ENCODE measurements at regions of chr11 and their contacts with region 1.

Region 1: DNA sequence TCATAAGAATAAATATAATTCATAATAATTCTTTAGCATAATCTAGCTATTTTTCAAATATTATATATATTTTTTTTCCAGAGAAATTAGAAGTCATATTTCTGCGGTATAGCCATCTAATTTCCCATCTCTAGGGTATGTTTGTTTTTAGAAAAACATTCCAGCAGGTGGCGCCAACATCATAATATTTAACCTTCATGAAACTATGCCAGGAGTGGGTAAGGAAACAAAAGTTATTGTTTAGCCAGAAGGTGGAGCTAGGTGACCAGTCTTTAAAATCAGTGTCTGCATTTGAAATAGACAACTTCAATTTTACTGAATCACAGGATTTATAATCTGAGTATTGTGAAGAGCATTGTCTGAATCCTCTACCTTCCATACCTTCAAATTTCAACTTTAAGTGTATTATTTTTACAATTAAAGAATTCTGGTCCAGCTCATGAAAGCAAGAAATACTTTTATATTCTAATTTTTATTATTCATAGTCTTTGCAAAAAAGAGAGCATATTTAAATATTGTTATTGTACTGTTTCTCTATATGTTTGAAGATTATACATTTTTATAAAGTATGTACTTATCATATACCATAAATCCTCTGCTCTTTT is 15.7 kb upstream of the CCDC179 start:
- DNase-seq: peak; percentile 83
- H3K4me3 ChIP-seq: no peak overlapping the region
- H3K27ac ChIP-seq: no peak overlapping the region
- H3K4me1 ChIP-seq: no peaks in the 10 kb centered on the region
- H3K27me3 ChIP-seq: no peaks in the 10 kb centered on the region
- CTCF ChIP-seq: peak; percentile 50

Region 2: GRCh38 chr11:22920939-22921565 is 45.1 kb after region 1 on chr11:
- intact Hi-C with region 1: loop called (anchors 10 kb)
- DNase-seq: peak; percentile 23
- H3K4me3 ChIP-seq: no peak overlapping the region
- H3K27ac ChIP-seq: no peak overlapping the region
- H3K4me1 ChIP-seq: no peaks in the 10 kb centered on the region
- H3K27me3 ChIP-seq: no peaks in the 10 kb centered on the region
- CTCF ChIP-seq: peak; percentile 37

Region 3: DNA sequence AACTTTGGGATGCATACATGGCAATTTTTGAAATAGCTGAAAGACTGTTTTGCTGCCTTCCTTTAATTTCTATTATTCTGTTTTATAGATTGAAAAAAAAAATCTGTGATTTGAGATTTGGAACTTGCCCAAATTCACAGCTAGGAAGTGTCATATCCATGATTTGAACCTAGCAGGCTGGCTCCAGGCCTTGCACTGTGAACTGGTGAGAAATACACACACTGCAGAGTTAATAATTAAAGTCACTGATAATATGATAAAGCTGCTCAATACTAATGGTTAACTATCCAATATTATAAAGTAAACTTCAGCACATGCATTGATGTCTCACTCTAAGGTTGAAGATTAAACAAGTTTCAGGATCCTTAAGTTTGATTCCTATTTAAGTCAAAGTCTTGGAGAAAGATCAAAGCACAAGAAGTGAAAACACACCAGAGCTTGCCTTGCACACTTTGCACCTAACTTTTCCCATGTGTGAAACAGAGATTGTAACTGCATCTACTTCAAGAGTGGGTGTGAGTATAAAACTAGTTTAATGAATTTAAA is 134.9 kb after region 1 on chr11:
- intact Hi-C with region 1: loop called (anchors 10 kb)
- DNase-seq: no peak
- H3K4me3 ChIP-seq: no peak overlapping the region
- H3K27ac ChIP-seq: no peak overlapping the region
- H3K4me1 ChIP-seq: no peaks in the 10 kb centered on the region
- H3K27me3 ChIP-seq: no peaks in the 10 kb centered on the region
- CTCF ChIP-seq: no peak

Measured in colonic mucosa (tissue), 4 donors.